ENCODE measurements at regions of chr12 and their contacts with region 1.

Region 1: DNA sequence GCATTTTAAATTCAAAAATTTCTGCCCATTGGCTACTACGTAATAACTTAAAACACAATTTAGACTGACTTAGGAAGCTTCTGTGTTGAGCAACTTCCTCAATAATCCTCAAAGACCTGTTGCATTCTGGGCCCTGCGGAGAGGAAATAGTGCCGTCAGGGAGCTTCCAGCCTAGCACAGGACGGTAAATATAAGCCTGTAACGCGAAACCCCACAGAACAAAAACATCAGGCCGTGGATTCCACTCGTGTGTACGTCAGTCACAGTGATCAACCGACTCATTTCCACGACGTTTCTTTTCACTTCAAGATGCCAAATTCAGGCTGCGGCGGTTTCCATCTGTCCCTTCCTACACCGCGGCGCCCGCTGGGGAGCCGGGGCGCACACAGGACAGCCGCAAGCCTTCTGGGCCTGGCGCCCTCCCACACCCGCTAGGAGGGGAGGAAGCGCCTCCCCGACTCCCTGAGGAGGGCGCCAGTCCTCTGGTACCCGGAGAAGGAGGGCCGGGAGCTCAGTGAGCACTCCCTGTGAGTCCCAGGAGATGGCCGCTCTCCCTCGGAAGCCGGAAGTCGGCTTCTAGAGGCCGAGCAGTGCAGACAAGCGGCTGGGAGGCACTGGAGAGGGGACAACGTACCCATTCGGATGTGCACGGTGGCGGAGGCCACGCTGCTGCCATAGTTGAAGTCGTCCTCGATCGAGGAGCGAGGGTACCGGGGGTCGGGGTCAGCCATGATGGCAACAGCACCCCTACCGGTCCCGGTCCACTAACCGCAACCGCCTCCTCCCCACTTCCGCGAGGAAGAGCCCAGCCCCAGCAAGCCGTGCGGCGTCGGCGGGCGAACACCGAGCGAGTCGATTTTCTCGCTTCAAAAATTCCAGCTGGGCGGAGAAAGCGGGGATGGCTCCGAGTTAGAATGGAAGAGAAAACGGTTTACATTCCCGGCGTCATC is at the start of gene TMBIM4:
- DNase-seq: peak; percentile 89
- ATAC-seq: peak; percentile 83
- H3K4me3 Mint-ChIP-seq: peak within 1 kb of the TSS; percentile 85
- H3K27ac Mint-ChIP-seq: peak within 1 kb of the TSS; percentile 100
- H3K4me1 Mint-ChIP-seq: peaks cover 39% of the 10 kb centered on the region
- H3K27me3 Mint-ChIP-seq: no peaks in the 10 kb centered on the region
- CTCF ChIP-seq: peak; percentile 18
- total RNA-seq, gene TMBIM4: 41.7 to 45.8 TPM

Region 2: GRCh38 chr12:66130277-66131066 is 39.0 kb before region 1 on chr12 and contains the start of gene LLPH:
- CTCF ChIA-PET with region 1: interaction called, 8 read pairs
- POLR2A ChIA-PET with region 1: interaction called, 24 read pairs
- intact Hi-C with region 1: loop called (anchors 2 kb)
- DNase-seq: peak; percentile 95
- ATAC-seq: peak; percentile 96
- H3K4me3 Mint-ChIP-seq: peak within 1 kb of the TSS; percentile 97
- H3K27ac Mint-ChIP-seq: peak within 1 kb of the TSS; percentile 97
- H3K4me1 Mint-ChIP-seq: peaks cover 45% of the 10 kb centered on the region
- H3K27me3 Mint-ChIP-seq: no peaks in the 10 kb centered on the region
- CTCF ChIP-seq: no peak
- total RNA-seq, gene LLPH: 33.6 to 34.1 TPM

Region 3: DNA sequence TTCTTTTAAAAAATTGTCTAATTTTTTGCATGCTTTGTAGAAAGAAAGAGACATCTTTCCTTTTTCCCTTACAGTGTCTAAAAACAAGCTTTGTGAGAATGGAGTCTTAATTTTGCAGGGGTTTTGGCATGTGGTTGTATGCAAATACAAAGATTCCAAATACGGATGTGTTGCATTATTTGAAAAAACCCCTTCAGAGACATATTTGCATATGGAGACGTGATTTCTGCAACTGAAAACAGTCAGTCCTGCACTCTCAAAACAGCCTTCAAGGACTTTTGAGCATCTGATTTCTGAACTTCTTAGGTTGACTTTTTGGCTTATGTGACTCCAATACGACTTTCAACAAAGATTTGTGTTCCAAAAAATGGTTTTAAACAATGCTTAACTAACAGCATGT is 27.3 kb after region 1 on chr12:
- CTCF ChIA-PET with region 1: interaction called, 13 read pairs
- POLR2A ChIA-PET with region 1: interaction called, 3 read pairs
- intact Hi-C with region 1: no loop called
- DNase-seq: no peak
- ATAC-seq: peak; percentile 82
- H3K4me3 Mint-ChIP-seq: no peak overlapping the region
- H3K27ac Mint-ChIP-seq: no peak overlapping the region
- H3K4me1 Mint-ChIP-seq: peaks cover 8% of the 10 kb centered on the region
- H3K27me3 Mint-ChIP-seq: peaks cover 42% of the 10 kb centered on the region
- CTCF ChIP-seq: no peak

Measured in activated CD8-positive, alpha-beta T cell treated with anti-CD3 and anti-CD28 coated beads for 36 hours (primary cell).